ENCODE measurements at regions of chr16 and their contacts with region 1.

Region 1: DNA sequence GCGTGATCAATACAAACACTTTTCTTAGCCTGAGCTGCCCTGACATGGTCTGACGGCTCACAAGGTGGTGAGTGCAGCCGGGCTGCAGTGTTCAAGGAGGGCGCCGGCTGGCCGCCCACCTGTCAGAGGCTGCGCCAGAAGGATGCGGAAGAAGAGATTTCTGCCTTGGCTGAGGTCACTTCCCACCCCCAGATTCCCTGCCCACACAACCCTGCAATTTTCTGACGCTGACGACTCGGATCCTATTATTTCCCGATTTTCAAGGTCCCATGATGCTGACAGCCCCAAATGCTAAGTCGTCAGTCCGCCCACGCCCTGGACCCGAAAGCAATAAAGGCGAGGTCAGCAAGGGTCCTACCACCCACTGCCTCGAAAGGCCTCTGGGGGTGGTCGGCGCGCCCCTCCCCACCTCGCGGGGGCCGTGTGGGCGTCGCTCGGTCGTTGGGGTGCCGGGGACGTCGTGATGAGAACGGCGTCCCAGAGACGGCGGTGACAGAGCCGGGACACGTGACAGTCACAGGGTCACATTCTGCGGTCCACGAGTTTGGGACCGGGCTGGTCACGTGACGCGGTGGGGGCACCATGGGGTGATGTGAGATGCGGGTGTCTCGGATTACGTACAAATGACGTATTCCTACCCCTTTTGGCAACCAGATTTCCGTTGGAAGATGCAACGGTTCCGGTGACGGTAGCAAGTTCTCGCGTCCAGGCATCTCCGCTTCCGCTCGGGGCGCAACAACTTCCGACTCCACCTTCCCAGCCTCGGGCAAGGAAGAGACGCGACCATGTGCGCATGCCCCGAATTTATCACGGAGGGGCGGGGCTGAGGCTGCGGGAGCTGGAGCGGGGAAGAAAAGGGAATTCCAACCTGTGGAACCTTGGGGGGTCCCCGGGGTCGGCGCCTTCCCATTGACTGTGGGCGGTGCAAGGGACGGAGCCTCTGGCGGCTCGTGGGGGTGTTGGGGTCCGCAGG is at the start of gene STX4:
- DNase-seq: peak; percentile 95
- ATAC-seq: peak; percentile 78
- H3K4me3 Mint-ChIP-seq: peak within 1 kb of the TSS; percentile 97
- H3K27ac Mint-ChIP-seq: peak within 1 kb of the TSS; percentile 94
- H3K4me1 Mint-ChIP-seq: peaks cover 17% of the 10 kb centered on the region
- H3K27me3 Mint-ChIP-seq: no peaks in the 10 kb centered on the region
- CTCF ChIP-seq: no peak
- total RNA-seq, gene STX4: 106 and 107 TPM in 2 replicates

Region 2: GRCh38 chr16:30957456-30958174 is 75.4 kb before region 1 on chr16 and contains the start of gene SETD1A:
- CTCF ChIA-PET with region 1: no interaction called
- POLR2A ChIA-PET with region 1: no interaction called
- intact Hi-C with region 1: loop called (anchors 1 kb)
- DNase-seq: peak; percentile 89
- ATAC-seq: peak; percentile 87
- H3K4me3 Mint-ChIP-seq: peak within 1 kb of the TSS; percentile 95
- H3K27ac Mint-ChIP-seq: peak within 1 kb of the TSS; percentile 99
- H3K4me1 Mint-ChIP-seq: peaks cover 31% of the 10 kb centered on the region
- H3K27me3 Mint-ChIP-seq: no peaks in the 10 kb centered on the region
- CTCF ChIP-seq: no peak
- total RNA-seq, gene SETD1A: 29.6 and 32.8 TPM in 2 replicates

Region 3: DNA sequence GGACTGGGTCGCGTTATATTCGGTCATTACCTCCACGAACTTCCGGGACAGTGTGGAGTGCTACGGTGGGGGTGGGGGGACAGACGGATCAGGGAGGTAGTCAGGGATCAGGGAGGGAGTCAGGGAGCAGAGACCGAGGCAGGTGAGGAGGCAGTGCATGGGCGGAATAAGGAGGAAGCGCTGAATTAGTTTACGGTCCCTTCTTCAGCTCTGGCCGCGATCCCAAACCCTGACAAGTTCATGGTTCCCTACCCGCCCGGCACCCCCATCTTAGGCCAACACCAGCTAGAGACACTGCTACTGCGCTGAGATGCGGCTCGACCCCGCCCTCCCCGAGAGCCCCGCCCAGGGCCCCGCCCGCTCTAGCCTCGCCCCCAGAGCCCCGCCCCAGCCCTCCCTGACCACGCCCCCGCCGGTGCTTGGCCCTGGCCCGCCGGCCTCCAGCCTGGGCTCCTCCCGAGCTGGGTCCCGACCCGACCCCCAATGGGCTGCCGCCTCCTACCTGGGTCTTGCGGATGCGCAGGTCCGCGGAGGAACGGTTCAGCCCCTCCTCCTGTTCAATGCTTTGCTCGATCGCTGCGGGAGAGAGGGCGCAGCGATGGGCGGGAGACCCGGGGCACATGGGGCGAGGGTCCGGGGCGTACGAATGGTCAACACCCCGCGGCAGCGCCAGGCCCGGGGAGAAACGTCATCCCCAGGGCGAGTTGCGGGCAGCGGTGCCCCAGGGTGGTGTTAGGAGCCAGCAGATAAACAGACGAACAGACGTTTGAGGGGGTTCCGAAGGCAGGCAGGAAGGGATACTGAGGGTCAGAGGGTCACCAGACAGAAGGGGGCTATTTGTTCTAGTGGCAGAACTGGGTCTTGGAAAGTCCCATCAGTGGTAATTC is 35.8 kb before region 1 on chr16:
- CTCF ChIA-PET with region 1: no interaction called
- POLR2A ChIA-PET with region 1: interaction called, 5 read pairs
- intact Hi-C with region 1: loop called (anchors 1 kb)
- DNase-seq: peak; percentile 68
- ATAC-seq: peak; percentile 99
- H3K4me3 Mint-ChIP-seq: peak overlapping the region; percentile 87
- H3K27ac Mint-ChIP-seq: peak overlapping the region; percentile 76
- H3K4me1 Mint-ChIP-seq: peaks cover 12% of the 10 kb centered on the region
- H3K27me3 Mint-ChIP-seq: no peaks in the 10 kb centered on the region
- CTCF ChIP-seq: no peak

Region 4: DNA sequence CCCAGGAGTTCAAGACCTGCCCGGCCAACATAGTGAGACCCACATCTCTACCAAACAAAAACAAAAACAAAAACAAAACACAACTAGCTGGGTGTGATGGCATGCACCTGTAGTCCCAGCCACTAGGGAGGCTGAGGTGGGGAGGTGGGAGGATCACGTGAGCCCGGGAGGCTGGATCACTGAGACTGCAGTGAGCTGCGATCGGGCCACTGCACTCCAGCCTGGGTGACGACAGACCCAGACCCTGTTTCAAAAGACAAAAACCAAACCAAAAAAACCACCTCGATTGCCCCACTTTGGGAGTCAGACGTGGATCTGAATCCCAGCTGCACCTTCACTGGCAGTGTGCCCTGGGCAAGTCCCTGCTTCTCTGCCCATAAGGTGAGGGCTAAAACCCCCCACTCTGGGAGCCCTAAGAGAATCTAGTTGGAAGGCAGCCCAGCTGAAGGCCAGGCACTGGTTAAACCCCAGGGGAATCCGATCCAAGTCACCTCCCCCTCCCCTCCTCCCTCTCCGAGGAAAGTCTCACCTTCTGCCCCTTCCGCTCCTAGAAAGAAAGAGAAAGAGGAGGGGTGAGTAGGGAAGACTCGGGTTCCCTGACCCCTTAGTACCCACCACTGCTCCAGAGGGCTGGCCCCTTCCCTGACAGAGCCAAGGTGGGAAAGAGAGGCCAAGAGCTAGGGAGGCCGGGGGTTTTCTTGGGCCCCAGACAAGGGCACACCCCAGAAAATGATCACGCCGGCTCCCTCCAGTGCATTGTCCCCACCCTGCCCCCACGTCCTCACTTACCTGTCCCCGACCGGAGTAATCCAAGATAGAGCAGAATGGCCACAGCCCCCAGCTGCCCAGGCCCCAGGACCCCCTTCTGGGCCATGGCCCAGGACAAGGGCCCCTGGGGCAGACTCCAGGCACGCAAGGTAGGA is 101.9 kb after region 1 on chr16:
- CTCF ChIA-PET with region 1: no interaction called
- POLR2A ChIA-PET with region 1: no interaction called
- intact Hi-C with region 1: no loop called
- DNase-seq: no peak
- ATAC-seq: no peak
- H3K4me3 Mint-ChIP-seq: no peak overlapping the region
- H3K27ac Mint-ChIP-seq: no peak overlapping the region
- H3K4me1 Mint-ChIP-seq: no peaks in the 10 kb centered on the region
- H3K27me3 Mint-ChIP-seq: no peaks in the 10 kb centered on the region
- CTCF ChIP-seq: no peak